Caco-2 (cell line): ENCODE measurements at regions of chr17 and their contacts with region 1.

Region 1: DNA sequence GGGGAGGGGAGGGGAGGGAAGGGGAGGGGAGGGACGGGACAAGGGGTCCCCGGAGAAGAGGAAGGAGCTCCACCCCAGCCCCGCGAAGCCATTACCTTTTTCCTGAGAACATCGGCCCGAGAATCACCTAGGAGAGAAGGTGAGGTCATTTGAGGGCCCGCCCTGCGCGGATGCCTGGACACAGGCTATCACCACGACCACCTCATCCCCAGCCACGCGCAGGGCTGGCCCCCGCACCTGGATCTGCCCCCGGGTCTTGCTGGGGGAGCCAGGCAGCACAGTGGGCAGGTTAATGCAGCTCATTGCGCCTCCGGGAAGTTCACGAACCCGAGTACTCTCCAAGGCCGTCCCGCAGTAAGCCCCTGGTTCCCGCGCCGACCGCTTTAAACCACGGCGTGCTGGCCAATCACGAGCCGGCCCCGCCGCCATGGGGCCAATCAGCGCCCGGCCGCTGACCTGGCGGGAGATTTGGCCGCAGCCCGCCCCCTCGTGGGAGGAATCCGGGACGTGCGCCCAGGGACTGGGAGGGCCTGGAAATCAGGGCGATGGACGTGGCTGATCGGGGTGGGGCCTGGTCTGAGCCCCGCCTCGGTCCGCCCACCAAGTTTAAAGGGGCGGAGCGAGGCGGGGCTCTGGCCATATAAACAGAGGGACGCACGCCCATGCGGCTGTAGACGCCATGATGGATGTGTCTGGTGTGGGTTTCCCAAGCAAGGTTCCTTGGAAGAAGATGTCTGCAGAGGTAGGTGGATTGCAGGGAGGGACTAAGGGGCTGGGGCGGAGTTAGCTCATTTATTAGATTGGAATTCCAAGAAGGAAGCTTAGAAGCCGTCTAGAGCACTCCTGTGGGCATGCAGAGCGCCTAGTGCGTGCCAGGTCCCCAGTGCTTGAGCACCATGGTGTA is at the starts of genes AFMID and TK1:
- DNase-seq: peak; percentile 98 to 100
- H3K4me3 ChIP-seq: peak within 1 kb of the TSS; percentile 87
- H3K4me3 Mint-ChIP-seq: peak within 1 kb of the TSS; percentile 72
- H3K27ac Mint-ChIP-seq: peak within 1 kb of the TSS; percentile 75
- H3K4me1 ChIP-seq: peaks cover 15% of the 10 kb centered on the region
- H3K4me1 Mint-ChIP-seq: peaks cover 22% of the 10 kb centered on the region
- H3K27me3 ChIP-seq: no peaks in the 10 kb centered on the region
- H3K27me3 Mint-ChIP-seq: no peaks in the 10 kb centered on the region
- CTCF ChIP-seq: peak; percentile 65 to 90
- total RNA-seq, gene AFMID: 68.5 and 83.0 TPM in 2 replicates
- total RNA-seq, gene TK1: 171 and 190 TPM in 2 replicates

Region 2: GRCh38 chr17:77968788-77969187 is 218.2 kb before region 1 on chr17:
- CTCF ChIA-PET with region 1: no interaction called
- POLR2A ChIA-PET with region 1: no interaction called
- intact Hi-C with region 1: no loop called
- DNase-seq: no peak
- H3K4me3 ChIP-seq: no peak overlapping the region
- H3K4me3 Mint-ChIP-seq: no peak overlapping the region
- H3K27ac Mint-ChIP-seq: no peak overlapping the region
- H3K4me1 ChIP-seq: no peaks in the 10 kb centered on the region
- H3K4me1 Mint-ChIP-seq: no peaks in the 10 kb centered on the region
- H3K27me3 ChIP-seq: no peaks in the 10 kb centered on the region
- H3K27me3 Mint-ChIP-seq: peaks cover 3% of the 10 kb centered on the region
- CTCF ChIP-seq: no peak

Region 3: GRCh38 chr17:78128551-78129350 is 58.2 kb before region 1 on chr17 and contains the start of gene TMC6:
- CTCF ChIA-PET with region 1: no interaction called
- POLR2A ChIA-PET with region 1: interaction called, 16 read pairs
- intact Hi-C with region 1: loop called (anchors 5 kb)
- DNase-seq: peak; percentile 91
- H3K4me3 ChIP-seq: peak within 1 kb of the TSS; percentile 58
- H3K4me3 Mint-ChIP-seq: peak within 1 kb of the TSS; percentile 75
- H3K27ac Mint-ChIP-seq: peak within 1 kb of the TSS; percentile 75
- H3K4me1 ChIP-seq: peaks cover 23% of the 10 kb centered on the region
- H3K4me1 Mint-ChIP-seq: peaks cover 9% of the 10 kb centered on the region
- H3K27me3 ChIP-seq: no peaks in the 10 kb centered on the region
- H3K27me3 Mint-ChIP-seq: no peaks in the 10 kb centered on the region
- CTCF ChIP-seq: no peak
- total RNA-seq, gene TMC6: 77.7 and 84.7 TPM in 2 replicates

Region 4: GRCh38 chr17:78168242-78168902 is 18.6 kb before region 1 on chr17 and contains the start of gene SYNGR2:
- CTCF ChIA-PET with region 1: interaction called, 3 read pairs
- POLR2A ChIA-PET with region 1: interaction called, 12 read pairs
- intact Hi-C with region 1: loop called (anchors 2 kb)
- DNase-seq: peak; percentile 87 to 97
- H3K4me3 ChIP-seq: peak within 1 kb of the TSS; percentile 95
- H3K4me3 Mint-ChIP-seq: peak within 1 kb of the TSS; percentile 76
- H3K27ac Mint-ChIP-seq: peak within 1 kb of the TSS; percentile 77
- H3K4me1 ChIP-seq: peaks cover 20% of the 10 kb centered on the region
- H3K4me1 Mint-ChIP-seq: peaks cover 14% of the 10 kb centered on the region
- H3K27me3 ChIP-seq: no peaks in the 10 kb centered on the region
- H3K27me3 Mint-ChIP-seq: no peaks in the 10 kb centered on the region
- CTCF ChIP-seq: no peak
- total RNA-seq, gene SYNGR2: 169 and 193 TPM in 2 replicates

Region 5: DNA sequence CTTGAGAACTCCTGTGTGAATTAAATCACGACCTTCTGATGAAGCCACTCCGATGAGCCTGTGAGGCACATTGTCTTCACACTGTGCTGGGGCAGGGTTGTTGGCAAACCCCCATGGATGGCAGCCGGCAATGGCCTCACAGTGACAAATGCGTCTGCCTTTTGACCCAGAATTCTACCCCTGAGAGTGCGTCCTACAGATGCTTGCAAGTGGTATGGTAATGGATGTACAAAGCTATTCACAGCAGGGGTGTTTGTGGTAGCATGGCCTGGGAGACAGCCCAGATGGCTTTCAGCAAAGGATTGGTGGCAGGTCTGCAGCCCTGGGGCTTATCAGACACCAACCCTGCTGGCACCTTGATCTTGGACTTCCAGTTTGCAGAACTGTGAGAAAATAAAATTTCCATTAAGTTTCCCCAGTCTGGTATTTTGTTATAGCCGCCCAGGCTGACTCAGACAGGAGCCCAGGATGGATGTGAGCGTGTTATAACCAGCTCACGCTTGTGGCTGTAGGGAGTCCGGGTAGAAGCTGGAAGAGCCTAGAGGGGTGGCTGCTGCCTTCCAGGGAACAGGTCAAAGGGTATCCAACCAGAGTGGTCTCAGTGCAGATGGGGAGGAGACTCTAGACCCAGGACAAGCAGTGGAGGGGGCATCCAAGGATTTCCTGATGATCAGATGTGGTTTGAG is 10.3 kb after region 1 on chr17:
- CTCF ChIA-PET with region 1: interaction called, 17 read pairs
- POLR2A ChIA-PET with region 1: interaction called, 14 read pairs
- intact Hi-C with region 1: no loop called
- DNase-seq: no peak
- H3K4me3 ChIP-seq: no peak overlapping the region
- H3K4me3 Mint-ChIP-seq: no peak overlapping the region
- H3K27ac Mint-ChIP-seq: no peak overlapping the region
- H3K4me1 ChIP-seq: peaks cover 11% of the 10 kb centered on the region
- H3K4me1 Mint-ChIP-seq: peaks cover 8% of the 10 kb centered on the region
- H3K27me3 ChIP-seq: no peaks in the 10 kb centered on the region
- H3K27me3 Mint-ChIP-seq: no peaks in the 10 kb centered on the region
- CTCF ChIP-seq: no peak

Region 6: DNA sequence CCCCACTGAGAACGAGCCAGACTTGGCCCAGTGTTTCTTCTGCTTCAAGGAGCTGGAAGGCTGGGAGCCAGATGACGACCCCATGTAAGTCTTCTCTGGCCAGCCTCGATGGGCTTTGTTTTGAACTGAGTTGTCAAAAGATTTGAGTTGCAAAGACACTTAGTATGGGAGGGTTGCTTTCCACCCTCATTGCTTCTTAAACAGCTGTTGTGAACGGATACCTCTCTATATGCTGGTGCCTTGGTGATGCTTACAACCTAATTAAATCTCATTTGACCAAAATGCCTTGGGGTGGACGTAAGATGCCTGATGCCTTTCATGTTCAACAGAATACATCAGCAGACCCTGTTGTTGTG is 27.7 kb after region 1 on chr17:
- CTCF ChIA-PET with region 1: interaction called, 14 read pairs
- POLR2A ChIA-PET with region 1: interaction called, 5 read pairs
- intact Hi-C with region 1: no loop called
- DNase-seq: no peak
- H3K4me3 ChIP-seq: peak overlapping the region; percentile 69
- H3K4me3 Mint-ChIP-seq: peak overlapping the region; percentile 94
- H3K27ac Mint-ChIP-seq: peak overlapping the region; percentile 95
- H3K4me1 ChIP-seq: no peaks in the 10 kb centered on the region
- H3K4me1 Mint-ChIP-seq: no peaks in the 10 kb centered on the region
- H3K27me3 ChIP-seq: no peaks in the 10 kb centered on the region
- H3K27me3 Mint-ChIP-seq: no peaks in the 10 kb centered on the region
- CTCF ChIP-seq: no peak

Region 7: GRCh38 chr17:78421484-78422266 is 234.7 kb after region 1 on chr17:
- CTCF ChIA-PET with region 1: interaction called, 16 read pairs
- POLR2A ChIA-PET with region 1: interaction called, 7 read pairs
- intact Hi-C with region 1: loop called (anchors 5 kb)
- DNase-seq: peak; percentile 93 to 96
- H3K4me3 ChIP-seq: peak overlapping the region; percentile 1; the same call in 1 of the 2 replicates
- H3K4me3 Mint-ChIP-seq: peak overlapping the region; percentile 72
- H3K27ac Mint-ChIP-seq: peak overlapping the region; percentile 95
- H3K4me1 ChIP-seq: peaks cover 37% of the 10 kb centered on the region
- H3K4me1 Mint-ChIP-seq: peaks cover 28% of the 10 kb centered on the region
- H3K27me3 ChIP-seq: no peaks in the 10 kb centered on the region
- H3K27me3 Mint-ChIP-seq: no peaks in the 10 kb centered on the region
- CTCF ChIP-seq: peak; percentile 98 to 99